ENCODE measurements at regions of chr3 and their contacts with region 1.

Region 1: DNA sequence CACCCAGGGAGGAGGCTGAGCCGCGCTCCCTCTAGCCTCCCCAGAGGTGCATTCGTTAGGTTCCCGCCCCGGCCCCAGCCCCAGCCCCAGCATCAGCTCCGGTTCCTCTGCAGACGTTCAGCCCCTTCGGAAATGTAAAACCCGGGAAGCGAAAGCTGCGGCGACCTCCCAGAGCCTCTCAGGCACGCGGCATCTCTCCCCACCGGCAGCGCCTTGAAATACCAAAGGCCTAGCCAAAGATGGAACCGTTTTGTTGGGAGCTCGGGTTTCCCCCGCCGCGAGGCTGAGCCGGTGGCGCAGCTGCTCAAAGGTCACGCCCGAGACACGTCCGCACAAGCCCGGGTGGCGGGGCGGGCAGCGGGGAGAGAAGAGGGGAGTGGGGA is 77.8 kb upstream of the HES1 start:
- DNase-seq: peak; percentile 67
- H3K4me3 ChIP-seq: peak overlapping the region; percentile 49
- H3K27ac ChIP-seq: no peak overlapping the region
- H3K4me1 ChIP-seq: peaks cover 18% of the 10 kb centered on the region
- CTCF ChIP-seq: no peak

Region 2: GRCh38 chr3:193883551-193883950 is 174.6 kb before region 1 on chr3:
- CTCF ChIA-PET with region 1: no interaction called
- POLR2A ChIA-PET with region 1: no interaction called
- intact Hi-C with region 1: no loop called
- DNase-seq: no peak
- H3K4me3 ChIP-seq: no peak overlapping the region
- H3K27ac ChIP-seq: no peak overlapping the region
- H3K4me1 ChIP-seq: peaks cover 13% of the 10 kb centered on the region
- CTCF ChIP-seq: no peak

Region 3: DNA sequence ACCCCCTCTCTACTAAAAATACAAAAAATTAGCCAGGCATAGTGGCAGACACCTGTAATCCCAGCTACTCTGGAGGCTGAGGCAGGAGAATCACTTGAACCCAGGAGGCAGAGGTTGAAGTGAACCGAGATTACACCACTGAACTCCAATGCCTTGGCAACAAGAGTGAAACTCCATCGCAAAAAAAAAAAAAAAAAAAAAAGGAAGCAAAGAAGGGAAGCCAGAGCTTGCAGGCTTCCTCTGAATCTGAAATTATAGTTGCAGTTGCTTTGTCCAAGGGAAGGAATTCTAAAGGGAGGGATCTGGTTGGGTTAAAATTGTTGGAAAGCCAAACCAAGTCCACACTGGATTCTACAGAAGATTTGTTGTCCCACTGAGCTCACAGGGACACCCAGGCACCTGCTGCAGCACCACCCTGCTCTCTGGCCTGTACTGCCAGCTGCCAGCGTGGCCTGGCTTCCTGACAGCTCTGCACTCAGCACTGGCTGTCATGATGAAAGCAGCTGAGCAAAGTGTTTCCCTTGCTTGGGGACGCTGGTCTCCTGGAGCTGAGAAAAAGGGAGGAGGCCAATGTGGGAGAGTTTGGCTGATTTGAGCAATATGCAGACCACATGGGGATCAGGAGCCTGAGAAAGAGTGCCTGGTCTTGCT is 11.1 kb before region 1 on chr3:
- CTCF ChIA-PET with region 1: no interaction called
- POLR2A ChIA-PET with region 1: interaction called, 11 read pairs
- intact Hi-C with region 1: no loop called
- DNase-seq: peak; percentile 77
- H3K4me3 ChIP-seq: no peak overlapping the region
- H3K27ac ChIP-seq: peak overlapping the region; percentile 25
- H3K4me1 ChIP-seq: peaks cover 14% of the 10 kb centered on the region
- CTCF ChIP-seq: no peak

Region 4: DNA sequence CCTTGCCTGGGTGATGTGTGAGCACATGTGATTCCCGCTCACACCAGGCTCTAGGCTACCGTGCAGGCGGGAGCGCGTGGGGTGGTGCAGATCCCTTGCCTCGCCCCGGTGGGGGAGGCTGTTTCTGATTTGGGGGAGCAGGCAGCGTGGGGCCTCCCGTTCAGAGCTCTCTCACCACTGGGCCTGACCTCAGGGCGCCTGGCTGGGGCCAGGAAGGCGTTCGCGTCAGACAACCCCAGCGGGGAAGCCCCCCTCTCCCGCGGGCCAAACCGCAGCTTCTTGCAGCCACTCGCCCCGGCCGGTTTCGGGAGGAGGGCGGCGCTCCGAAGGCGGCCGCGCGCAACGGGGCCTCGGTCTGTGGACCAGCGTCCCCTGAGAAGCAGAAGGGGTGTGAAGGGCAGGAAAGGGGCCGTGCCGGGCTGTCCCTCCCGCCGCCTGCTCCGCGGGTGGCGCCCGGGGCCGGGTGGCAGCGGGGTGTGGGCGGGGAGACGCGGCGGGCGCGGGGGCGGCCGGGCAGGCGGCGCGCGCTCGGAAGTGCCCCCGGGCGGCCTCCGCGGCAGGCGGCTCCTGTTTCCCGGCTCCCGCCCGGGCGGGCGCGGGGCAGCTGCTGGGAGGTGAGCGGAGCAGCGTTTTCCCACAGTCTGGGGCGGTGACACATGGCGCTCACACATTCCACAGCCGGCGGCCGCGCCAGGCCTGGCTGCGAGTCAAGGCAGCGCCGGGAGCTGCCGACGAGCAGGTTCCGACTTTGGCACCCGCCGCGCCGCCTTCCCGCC is 12.6 kb after region 1 on chr3:
- CTCF ChIA-PET with region 1: interaction called, 4 read pairs
- POLR2A ChIA-PET with region 1: interaction called, 16 read pairs
- intact Hi-C with region 1: no loop called
- DNase-seq: peak; percentile 86
- H3K4me3 ChIP-seq: peak overlapping the region; percentile 61
- H3K27ac ChIP-seq: peak overlapping the region; percentile 54
- H3K4me1 ChIP-seq: peaks cover 57% of the 10 kb centered on the region
- CTCF ChIP-seq: no peak

Region 5: DNA sequence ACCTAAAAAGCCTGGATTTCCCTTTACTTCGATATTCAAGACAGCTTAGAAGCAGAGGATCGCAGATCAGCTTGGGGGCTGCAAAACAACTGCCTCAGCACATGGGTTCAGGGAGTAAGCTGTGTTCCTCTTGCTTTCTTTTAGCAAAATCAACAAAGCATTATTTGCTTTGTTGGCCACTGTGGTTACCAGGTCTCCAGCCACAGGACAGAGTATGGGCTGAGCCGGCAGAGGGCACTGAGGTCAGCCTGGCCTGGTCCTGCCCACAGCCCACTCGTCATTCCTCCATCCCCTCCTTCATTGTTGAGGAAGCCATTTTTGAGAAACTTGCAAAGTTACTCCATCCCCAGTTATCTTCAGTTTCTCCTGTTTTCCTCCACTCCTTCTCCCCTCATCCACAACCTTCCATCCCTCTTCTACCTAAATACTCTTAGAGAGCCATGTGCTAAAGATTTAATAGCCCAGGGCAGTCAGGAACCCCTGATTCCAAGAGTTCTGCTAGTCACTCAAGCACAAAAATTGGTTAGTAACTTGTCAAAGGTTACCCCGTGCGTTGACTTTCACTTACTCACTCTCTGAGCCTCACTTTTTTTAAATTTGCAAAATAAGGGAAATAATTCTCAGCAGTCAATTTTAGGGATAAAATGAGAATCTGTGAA is 17.8 kb after region 1 on chr3:
- CTCF ChIA-PET with region 1: interaction called, 4 read pairs
- POLR2A ChIA-PET with region 1: interaction called, 16 read pairs
- intact Hi-C with region 1: no loop called
- DNase-seq: no peak
- H3K4me3 ChIP-seq: no peak overlapping the region
- H3K27ac ChIP-seq: no peak overlapping the region
- H3K4me1 ChIP-seq: peaks cover 56% of the 10 kb centered on the region
- CTCF ChIP-seq: no peak

Region 6: GRCh38 chr3:194161131-194162045 is 103.2 kb after region 1 on chr3:
- CTCF ChIA-PET with region 1: no interaction called
- POLR2A ChIA-PET with region 1: no interaction called
- intact Hi-C with region 1: no loop called
- DNase-seq: no peak
- H3K4me3 ChIP-seq: no peak overlapping the region
- H3K27ac ChIP-seq: no peak overlapping the region
- H3K4me1 ChIP-seq: no peaks in the 10 kb centered on the region
- CTCF ChIP-seq: no peak